Activated CD4-positive, alpha-beta T cell treated with anti-CD3 and anti-CD28 coated beads for 36 hours (primary cell): ENCODE measurements at regions of chr4 and their contacts with region 1.

Region 1: GRCh38 chr4:931960-932712 is at the starts of genes GAK and TMEM175:
- DNase-seq: peak; percentile 98
- ATAC-seq: peak; percentile 95
- H3K4me3 Mint-ChIP-seq: peak within 1 kb of the TSS; percentile 87
- H3K27ac Mint-ChIP-seq: peak within 1 kb of the TSS; percentile 89
- H3K4me1 Mint-ChIP-seq: peaks cover 29% of the 10 kb centered on the region
- H3K27me3 Mint-ChIP-seq: no peaks in the 10 kb centered on the region
- total RNA-seq, gene GAK: 82.9 to 88.0 TPM
- total RNA-seq, gene TMEM175: 15.2 to 17.3 TPM

Region 2: DNA sequence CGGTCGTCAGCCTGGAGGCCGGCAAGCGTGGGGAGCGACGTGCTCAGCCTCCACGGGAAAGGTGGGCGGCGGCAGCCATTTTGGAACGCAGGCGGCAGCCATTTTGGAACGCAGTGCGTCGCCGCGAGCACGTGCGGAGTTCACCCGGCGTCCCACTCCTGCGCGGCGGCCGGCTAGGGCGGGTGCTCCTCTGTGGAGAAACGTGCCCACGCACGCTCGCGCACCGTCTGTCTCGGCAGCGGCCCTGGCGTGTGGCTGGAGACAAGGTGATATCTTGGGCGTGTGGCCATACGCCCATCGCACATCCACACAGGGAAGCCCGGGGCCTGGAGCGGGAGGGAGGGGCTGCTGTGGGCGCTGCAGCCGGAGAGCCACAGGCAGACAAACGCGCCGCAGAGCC is 127.3 kb before region 1 on chr4:
- CTCF ChIA-PET with region 1: no interaction called
- POLR2A ChIA-PET with region 1: no interaction called
- intact Hi-C with region 1: no loop called
- DNase-seq: no peak
- ATAC-seq: no peak
- H3K4me3 Mint-ChIP-seq: no peak overlapping the region
- H3K27ac Mint-ChIP-seq: no peak overlapping the region
- H3K4me1 Mint-ChIP-seq: no peaks in the 10 kb centered on the region
- H3K27me3 Mint-ChIP-seq: peaks cover 9% of the 10 kb centered on the region

Region 3: DNA sequence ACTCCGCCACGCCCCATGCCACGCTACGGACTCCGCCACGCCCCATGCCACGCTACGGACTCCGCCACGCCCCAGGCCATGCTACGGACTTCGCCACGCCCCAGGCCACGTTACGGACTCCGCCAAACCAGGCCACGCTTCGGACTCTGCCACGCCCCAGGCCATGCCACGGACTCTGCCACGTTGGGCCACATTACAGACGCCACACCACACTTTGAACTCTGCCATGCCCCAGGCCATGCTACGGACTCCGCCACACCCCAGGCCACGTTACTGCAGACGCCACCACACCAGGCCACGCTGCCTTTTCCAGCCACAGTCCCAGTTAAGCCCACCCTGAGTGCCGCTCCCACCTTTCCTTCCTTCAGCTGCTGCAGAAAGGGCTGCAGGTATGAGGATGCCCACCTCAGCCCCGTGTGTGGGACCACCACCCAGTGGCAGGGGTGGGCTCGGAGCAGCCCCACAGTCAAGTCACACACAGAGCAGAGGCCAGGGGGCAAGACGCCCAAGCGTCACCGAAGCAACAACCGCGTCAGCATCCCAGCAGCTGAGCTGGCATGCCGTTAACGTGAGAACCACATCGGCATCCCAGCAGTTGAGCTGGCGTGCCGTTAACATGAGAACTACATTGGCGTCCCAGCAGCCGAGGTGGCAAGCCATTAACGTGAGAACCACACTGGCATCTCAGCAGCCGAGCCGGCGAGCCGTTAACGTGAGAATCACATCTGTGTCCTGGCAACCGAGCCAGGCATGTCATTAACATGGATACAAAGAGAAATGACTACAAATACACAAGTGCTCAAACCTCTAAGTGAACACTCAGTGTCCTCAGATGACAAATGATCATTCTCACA is 26.4 kb before region 1 on chr4:
- CTCF ChIA-PET with region 1: no interaction called
- POLR2A ChIA-PET with region 1: no interaction called
- intact Hi-C with region 1: loop called in 1 of 2 experiments (anchors 1 kb)
- DNase-seq: no peak
- ATAC-seq: no peak
- H3K4me3 Mint-ChIP-seq: no peak overlapping the region
- H3K27ac Mint-ChIP-seq: no peak overlapping the region
- H3K4me1 Mint-ChIP-seq: no peaks in the 10 kb centered on the region
- H3K27me3 Mint-ChIP-seq: no peaks in the 10 kb centered on the region

Region 4: DNA sequence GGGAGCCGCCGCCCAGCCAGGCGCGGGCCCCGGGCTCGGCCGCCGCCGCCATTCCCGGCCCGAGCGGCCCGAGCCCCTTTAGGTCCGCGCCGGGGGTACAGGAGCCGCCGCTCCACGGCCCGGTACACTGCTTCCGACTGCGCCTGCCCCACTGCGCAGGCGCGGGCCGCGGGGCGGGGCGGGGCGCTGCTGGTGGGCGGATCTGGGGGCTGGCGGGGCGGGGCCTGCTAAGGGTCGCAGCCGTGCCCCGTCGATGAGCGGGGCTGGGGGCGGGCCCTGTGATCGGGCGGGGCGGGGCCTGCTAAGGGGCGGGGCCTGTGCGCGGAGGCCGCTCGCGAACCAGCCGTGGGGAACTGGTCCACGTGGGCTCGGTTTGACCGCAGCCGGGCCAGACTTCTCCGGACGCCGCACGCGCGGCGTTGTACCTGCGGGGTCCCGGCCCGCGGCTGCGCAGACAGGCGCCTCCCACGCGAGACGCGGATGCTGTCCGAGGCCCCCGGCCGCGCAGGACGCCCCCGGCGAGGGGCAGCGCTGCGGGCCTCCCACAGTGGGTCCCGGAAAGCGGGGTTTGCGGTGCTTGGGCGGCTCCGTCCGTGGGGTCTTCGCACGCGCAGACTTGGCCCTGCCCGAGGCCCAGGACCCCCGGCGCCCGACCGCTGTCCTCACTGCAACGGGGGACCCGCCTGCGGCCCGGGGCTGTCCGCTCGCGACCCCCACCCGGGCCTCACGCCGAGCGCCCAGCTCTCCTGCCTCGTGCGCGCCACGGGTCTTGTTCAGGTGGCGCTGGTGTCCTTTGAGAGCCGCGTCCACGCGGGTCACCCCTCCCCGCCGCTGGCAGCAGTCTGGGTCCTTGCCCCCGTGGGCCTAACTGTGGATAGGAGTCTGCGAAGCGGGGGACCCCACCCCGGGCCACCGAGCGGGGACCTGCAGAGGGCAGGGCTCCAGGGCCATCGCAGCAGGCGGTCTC is 41.6 kb after region 1 on chr4 and contains the start of gene DGKQ:
- CTCF ChIA-PET with region 1: no interaction called
- POLR2A ChIA-PET with region 1: interaction called, 5 read pairs
- intact Hi-C with region 1: loop called in 1 of 2 experiments (anchors 1 kb)
- DNase-seq: peak; percentile 93
- ATAC-seq: peak; percentile 96
- H3K4me3 Mint-ChIP-seq: peak within 1 kb of the TSS; percentile 58
- H3K27ac Mint-ChIP-seq: no peak within 1 kb of the TSS
- H3K4me1 Mint-ChIP-seq: peaks cover 6% of the 10 kb centered on the region
- H3K27me3 Mint-ChIP-seq: no peaks in the 10 kb centered on the region
- total RNA-seq, gene DGKQ: 9.3 to 11.3 TPM